Activated CD8-positive, alpha-beta T cell treated with anti-CD3 and anti-CD28 coated beads for 36 hours (primary cell): ENCODE measurements at regions of chr3 and their contacts with region 1.

Region 1: GRCh38 chr3:172562871-172563863 is 39.9 kb upstream of the TNFSF10 start:
- DNase-seq: peak; percentile 63
- ATAC-seq: peak; percentile 78
- H3K4me3 Mint-ChIP-seq: peak overlapping the region; percentile 40
- H3K27ac Mint-ChIP-seq: peak overlapping the region; percentile 83
- H3K4me1 Mint-ChIP-seq: peaks cover 32% of the 10 kb centered on the region
- H3K27me3 Mint-ChIP-seq: no peaks in the 10 kb centered on the region
- CTCF ChIP-seq: no peak

Region 2: DNA sequence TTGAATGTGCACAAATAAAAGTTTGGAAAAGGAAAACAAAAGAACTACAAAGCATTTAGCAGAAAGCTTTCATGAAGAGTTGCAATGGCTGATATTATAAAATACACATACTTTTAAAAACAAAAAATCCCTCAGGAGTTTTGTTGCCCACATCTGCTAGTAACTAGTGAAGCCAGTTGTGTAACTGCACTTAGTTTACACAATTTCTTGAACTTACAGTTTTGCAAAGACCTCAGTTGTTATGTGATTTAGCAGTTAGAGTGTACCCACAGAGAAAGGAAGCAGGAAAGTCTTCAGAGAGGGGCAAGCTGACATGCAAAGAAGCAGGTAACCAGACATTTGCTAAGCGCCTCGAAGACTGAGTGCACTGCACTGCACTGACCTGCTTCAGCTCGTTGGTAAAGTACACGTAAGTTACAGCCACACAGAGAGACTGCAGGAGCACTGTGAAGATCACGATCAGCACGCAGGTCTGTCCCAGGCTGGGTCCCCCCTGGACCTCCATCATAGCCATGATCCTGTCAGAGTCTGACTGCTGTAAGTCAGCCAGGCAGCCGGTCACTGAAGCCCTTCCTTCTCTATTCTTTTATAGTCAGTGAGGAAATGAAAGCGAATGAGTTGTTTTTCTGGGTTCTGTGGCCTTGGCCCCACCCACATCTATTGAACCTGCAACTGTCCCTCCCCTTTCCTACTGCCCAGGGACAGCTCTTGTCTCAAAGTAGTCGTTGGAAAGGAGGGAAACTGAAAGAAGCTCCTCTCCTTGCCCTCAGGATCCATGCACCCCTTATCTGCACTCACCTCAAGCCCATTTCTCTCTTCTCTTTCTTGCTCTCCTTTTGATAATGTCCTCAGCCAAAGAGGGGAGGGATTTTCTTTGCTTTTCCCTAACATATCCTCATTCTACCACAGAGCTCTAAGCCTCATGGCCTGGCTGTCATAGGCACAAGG is 40.0 kb before region 1 on chr3 and contains the start of gene TNFSF10:
- CTCF ChIA-PET with region 1: interaction called, 4 read pairs
- POLR2A ChIA-PET with region 1: interaction called, 14 read pairs
- intact Hi-C with region 1: loop called (anchors 2 kb)
- DNase-seq: peak; percentile 86
- ATAC-seq: peak; percentile 87
- H3K4me3 Mint-ChIP-seq: peak within 1 kb of the TSS; percentile 92
- H3K27ac Mint-ChIP-seq: peak within 1 kb of the TSS; percentile 91
- H3K4me1 Mint-ChIP-seq: peaks cover 49% of the 10 kb centered on the region
- H3K27me3 Mint-ChIP-seq: no peaks in the 10 kb centered on the region
- CTCF ChIP-seq: no peak
- total RNA-seq, gene TNFSF10: 21.5 to 23.6 TPM

Region 3: DNA sequence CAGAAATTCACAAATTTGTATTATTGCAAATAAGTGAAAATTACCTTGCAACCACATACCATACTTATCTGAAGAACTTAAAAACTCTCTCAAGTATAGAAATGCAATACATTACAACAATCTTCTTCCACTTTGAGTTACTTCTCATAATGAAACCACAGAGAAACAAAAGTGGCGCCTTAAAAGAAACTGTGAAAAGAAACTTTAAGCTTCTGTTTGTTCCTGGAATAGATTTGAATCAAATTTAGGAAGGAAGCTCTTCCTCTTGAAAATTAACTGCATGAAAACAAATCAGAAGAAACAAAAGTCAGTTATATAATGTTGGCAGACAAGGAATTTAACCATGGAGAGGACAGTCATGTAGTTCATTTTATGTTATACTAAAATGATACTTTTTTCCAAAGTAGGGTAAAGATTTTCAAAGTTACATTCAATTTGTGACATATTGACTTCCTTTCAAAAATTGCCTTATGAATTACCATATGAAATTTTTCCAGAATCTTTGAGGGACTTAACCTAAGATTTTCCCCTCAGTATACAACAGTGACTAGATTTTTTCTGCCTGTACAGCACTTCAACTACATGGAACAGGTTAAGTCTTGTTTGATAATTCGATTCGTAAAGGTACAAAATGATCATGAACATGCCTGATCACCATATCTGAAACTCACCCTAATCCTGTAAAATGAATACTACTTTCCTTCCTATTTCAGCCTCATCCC is 17.7 kb after region 1 on chr3:
- CTCF ChIA-PET with region 1: no interaction called
- POLR2A ChIA-PET with region 1: interaction called, 11 read pairs
- intact Hi-C with region 1: loop called (anchors 2 kb)
- DNase-seq: no peak
- ATAC-seq: peak; percentile 53
- H3K4me3 Mint-ChIP-seq: peak overlapping the region; percentile 37
- H3K27ac Mint-ChIP-seq: peak overlapping the region; percentile 86
- H3K4me1 Mint-ChIP-seq: peaks cover 78% of the 10 kb centered on the region
- H3K27me3 Mint-ChIP-seq: no peaks in the 10 kb centered on the region
- CTCF ChIP-seq: no peak